ENCODE measurements at regions of chr6 and their contacts with region 1.

Region 1: DNA sequence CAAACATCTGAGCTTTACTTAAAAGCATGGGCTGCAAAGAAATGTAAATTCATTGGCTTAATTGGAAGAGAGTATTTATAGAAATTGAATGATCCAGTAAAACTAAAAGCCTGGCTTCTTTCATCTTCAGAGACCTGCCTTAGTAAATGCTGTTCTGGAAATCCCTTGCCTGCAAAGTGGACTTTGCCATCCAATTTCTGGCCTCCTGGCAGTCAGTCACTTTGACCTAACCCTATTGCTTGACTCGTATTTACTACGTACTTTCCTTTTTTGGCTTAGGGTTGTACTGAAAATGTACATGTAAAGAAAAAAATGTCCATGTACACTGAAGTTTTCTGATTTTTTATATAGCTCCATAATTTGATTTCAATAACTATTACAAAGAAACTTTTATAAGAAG is 47.1 kb downstream of the E2F3 start:
- DNase-seq: no peak
- H3K4me3 ChIP-seq: no peak overlapping the region
- H3K27ac ChIP-seq: no peak overlapping the region
- H3K4me1 ChIP-seq: no peaks in the 10 kb centered on the region
- H3K27me3 ChIP-seq: no peaks in the 10 kb centered on the region
- CTCF ChIP-seq: no peak

Region 2: GRCh38 chr6:18545726-18546125 is 1903.1 kb before region 1 on chr6:
- CTCF ChIA-PET with region 1: no interaction called
- POLR2A ChIA-PET with region 1: interaction called, 19 read pairs
- intact Hi-C with region 1: no loop called
- DNase-seq: peak; percentile 66
- H3K4me3 ChIP-seq: no peak overlapping the region
- H3K27ac ChIP-seq: peak overlapping the region; percentile 41
- H3K4me1 ChIP-seq: no peaks in the 10 kb centered on the region
- H3K27me3 ChIP-seq: no peaks in the 10 kb centered on the region
- CTCF ChIP-seq: no peak

Region 3: DNA sequence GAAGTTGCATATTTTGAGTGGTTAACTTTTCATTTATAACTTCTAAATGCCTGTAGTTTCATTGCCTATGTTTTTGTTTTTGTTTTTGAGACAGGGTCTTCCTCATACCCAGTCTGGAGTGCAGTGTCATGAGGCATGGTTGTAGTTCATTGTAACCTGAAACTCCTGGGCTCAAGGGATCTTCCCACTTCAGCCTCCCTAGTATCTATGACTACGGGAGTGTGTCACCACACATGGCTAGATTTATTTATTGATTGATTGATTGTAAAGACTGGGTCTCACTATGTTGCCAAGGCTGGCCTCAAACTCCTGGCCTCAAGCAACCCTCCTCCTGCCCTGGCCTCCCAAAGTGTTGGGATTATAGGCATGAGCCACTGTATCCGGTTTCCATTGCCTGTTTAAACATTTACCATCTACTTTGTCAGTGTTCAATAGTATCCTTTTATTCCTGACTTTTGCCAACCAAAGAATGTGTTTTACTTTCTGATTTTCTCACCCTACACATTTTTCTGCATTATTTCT is 230.1 kb after region 1 on chr6:
- CTCF ChIA-PET with region 1: no interaction called
- POLR2A ChIA-PET with region 1: no interaction called
- intact Hi-C with region 1: no loop called
- DNase-seq: no peak
- H3K4me3 ChIP-seq: no peak overlapping the region
- H3K27ac ChIP-seq: no peak overlapping the region
- H3K4me1 ChIP-seq: peaks cover 14% of the 10 kb centered on the region
- H3K27me3 ChIP-seq: no peaks in the 10 kb centered on the region
- CTCF ChIP-seq: no peak

Measured in A673 (cell line).